ENCODE measurements at regions of chr6 and their contacts with region 1.

Region 1: GRCh38 chr6:31652925-31653718 is 661 bp upstream of the BAG6 start:
- DNase-seq: peak; percentile 96
- ATAC-seq: peak; percentile 73
- H3K4me3 Mint-ChIP-seq: peak overlapping the region; percentile 93
- H3K27ac Mint-ChIP-seq: peak overlapping the region; percentile 100
- H3K4me1 Mint-ChIP-seq: peaks cover 55% of the 10 kb centered on the region
- H3K27me3 Mint-ChIP-seq: no peaks in the 10 kb centered on the region
- CTCF ChIP-seq: no peak

Region 2: GRCh38 chr6:31419842-31420241 is 233.3 kb before region 1 on chr6:
- CTCF ChIA-PET with region 1: no interaction called
- POLR2A ChIA-PET with region 1: no interaction called
- intact Hi-C with region 1: no loop called
- DNase-seq: no peak
- ATAC-seq: no peak
- H3K4me3 Mint-ChIP-seq: no peak overlapping the region
- H3K27ac Mint-ChIP-seq: no peak overlapping the region
- H3K4me1 Mint-ChIP-seq: peaks cover 1% of the 10 kb centered on the region
- H3K27me3 Mint-ChIP-seq: no peaks in the 10 kb centered on the region
- CTCF ChIP-seq: no peak

Region 3: DNA sequence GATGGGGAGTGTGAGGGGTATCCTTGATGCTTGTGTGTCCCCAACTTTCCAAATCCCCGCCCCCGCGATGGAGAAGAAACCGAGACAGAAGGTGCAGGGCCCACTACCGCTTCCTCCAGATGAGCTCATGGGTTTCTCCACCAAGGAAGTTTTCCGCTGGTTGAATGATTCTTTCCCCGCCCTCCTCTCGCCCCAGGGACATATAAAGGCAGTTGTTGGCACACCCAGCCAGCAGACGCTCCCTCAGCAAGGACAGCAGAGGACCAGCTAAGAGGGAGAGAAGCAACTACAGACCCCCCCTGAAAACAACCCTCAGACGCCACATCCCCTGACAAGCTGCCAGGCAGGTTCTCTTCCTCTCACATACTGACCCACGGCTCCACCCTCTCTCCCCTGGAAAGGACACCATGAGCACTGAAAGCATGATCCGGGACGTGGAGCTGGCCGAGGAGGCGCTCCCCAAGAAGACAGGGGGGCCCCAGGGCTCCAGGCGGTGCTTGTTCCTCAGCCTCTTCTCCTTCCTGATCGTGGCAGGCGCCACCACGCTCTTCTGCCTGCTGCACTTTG is 77.7 kb before region 1 on chr6 and contains the start of gene TNF:
- CTCF ChIA-PET with region 1: interaction called, 4 read pairs
- POLR2A ChIA-PET with region 1: interaction called, 12 read pairs
- intact Hi-C with region 1: no loop called
- DNase-seq: peak; percentile 87
- ATAC-seq: peak; percentile 21
- H3K4me3 Mint-ChIP-seq: peak within 1 kb of the TSS; percentile 96
- H3K27ac Mint-ChIP-seq: peak within 1 kb of the TSS; percentile 97
- H3K4me1 Mint-ChIP-seq: peaks cover 54% of the 10 kb centered on the region
- H3K27me3 Mint-ChIP-seq: no peaks in the 10 kb centered on the region
- CTCF ChIP-seq: no peak
- total RNA-seq, gene TNF: 89.2 to 92.5 TPM

Region 4: DNA sequence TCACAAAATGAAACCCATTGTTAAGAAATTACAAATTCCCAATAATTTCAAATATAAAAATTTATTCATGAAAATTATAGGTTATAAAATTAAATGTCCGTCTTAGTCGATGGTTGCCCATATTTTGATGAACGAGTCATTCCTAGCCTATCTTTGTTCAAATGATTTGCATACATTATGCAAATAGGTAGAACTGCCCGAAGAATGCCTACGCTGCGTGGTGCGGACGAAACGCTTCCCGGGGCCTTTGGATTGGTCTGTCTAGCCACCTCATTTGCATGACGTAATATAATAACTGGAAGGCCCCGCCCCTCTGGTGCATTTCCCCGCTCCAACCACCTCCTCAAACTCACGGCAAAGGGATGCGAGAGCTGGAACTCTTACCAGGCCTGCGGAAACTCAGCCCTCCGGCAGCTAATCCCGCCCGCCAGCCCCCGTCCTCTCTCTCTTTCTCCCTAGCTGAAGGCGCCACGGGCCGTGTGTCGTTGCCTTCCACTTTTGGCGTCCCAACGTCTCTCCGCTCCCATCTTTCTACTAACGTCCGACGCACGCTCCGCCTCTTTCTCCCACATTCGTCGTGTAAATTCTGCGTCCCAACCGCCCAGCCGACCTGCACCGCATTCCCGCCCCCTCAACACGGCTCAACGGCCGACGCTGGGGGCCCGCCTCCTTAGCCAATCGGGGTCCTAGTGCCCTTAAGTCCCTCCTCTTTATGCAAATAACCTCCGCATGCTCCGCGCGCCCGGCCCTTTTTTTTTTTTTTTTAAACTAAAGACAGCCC is 33.1 kb before region 1 on chr6:
- CTCF ChIA-PET with region 1: interaction called, 4 read pairs
- POLR2A ChIA-PET with region 1: interaction called, 235 read pairs
- intact Hi-C with region 1: no loop called
- DNase-seq: peak; percentile 99
- ATAC-seq: peak; percentile 84
- H3K4me3 Mint-ChIP-seq: peak overlapping the region; percentile 95
- H3K27ac Mint-ChIP-seq: peak overlapping the region; percentile 97
- H3K4me1 Mint-ChIP-seq: peaks cover 59% of the 10 kb centered on the region
- H3K27me3 Mint-ChIP-seq: no peaks in the 10 kb centered on the region
- CTCF ChIP-seq: no peak

Region 5: DNA sequence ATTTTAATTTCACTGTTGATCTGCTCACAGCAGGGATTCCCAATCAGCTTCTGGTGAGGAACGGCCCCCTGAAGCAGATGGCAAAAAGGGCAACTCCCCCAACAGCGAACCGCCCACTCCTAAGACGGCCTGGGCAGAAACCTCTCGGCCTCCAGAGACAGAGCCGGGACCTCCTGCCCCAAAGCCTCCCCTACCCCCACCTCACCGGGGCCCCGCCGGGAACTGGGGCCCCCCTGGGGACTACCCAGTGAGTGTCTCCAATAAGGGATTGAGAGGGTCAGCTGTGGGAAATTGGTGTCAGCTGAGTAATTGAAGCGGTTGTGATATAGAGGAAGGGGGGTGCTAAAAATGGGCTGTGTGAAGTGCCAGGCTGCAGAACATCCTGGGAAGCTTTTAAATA is 26.2 kb before region 1 on chr6:
- CTCF ChIA-PET with region 1: interaction called, 4 read pairs
- POLR2A ChIA-PET with region 1: interaction called, 235 read pairs
- intact Hi-C with region 1: no loop called
- DNase-seq: no peak
- ATAC-seq: no peak
- H3K4me3 Mint-ChIP-seq: no peak overlapping the region
- H3K27ac Mint-ChIP-seq: no peak overlapping the region
- H3K4me1 Mint-ChIP-seq: peaks cover 23% of the 10 kb centered on the region
- H3K27me3 Mint-ChIP-seq: no peaks in the 10 kb centered on the region
- CTCF ChIP-seq: no peak

Region 6: DNA sequence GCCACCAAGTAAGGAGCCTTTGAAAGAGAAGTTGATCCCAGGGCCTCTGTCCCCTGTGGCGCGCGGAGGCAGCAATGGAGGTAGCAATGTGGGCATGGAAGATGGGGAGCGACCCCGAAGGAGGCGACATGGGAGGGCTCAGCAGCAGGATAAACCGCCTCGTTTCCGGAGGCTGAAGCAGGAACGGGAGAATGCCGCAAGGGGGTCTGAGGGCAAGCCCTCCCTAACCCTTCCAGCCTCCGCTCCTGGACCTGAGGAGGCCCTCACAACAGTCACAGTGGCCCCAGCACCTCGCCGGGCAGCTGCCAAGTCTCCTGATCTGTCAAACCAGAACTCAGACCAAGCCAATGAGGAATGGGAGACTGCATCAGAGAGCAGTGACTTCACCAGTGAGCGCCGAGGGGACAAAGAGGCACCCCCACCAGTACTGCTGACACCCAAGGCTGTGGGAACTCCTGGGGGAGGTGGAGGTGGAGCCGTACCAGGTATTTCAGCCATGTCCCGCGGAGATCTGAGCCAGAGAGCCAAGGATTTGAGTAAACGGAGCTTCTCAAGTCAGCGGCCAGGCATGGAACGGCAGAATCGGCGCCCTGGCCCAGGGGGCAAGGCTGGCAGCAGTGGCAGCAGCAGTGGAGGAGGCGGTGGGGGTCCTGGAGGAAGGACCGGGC is 20.7 kb before region 1 on chr6:
- CTCF ChIA-PET with region 1: interaction called, 3 read pairs
- POLR2A ChIA-PET with region 1: interaction called, 235 read pairs
- intact Hi-C with region 1: no loop called
- DNase-seq: no peak
- ATAC-seq: no peak
- H3K4me3 Mint-ChIP-seq: no peak overlapping the region
- H3K27ac Mint-ChIP-seq: peak overlapping the region; percentile 27
- H3K4me1 Mint-ChIP-seq: no peaks in the 10 kb centered on the region
- H3K27me3 Mint-ChIP-seq: no peaks in the 10 kb centered on the region
- CTCF ChIP-seq: no peak

Region 7: DNA sequence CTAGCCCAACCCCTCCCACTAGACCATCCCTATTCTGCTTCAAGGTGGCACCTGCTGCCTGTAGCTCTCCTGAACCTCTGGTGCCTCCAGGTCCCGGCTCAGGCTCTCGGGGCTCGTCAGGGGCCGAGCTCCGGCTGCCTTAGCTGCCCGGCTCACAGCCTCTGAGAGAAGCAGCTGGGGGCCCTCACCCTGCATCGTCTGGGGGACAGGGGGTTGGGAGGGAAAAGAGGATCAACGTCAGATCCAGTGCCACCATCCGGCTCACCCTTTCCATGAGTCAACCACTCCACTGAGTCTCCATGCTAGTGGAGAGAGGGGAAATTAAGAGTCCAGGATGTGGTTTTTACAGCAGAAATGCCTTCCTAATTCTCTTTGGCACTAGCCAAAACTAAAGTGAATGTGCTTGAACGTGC is 13.7 kb before region 1 on chr6:
- CTCF ChIA-PET with region 1: interaction called, 4 read pairs
- POLR2A ChIA-PET with region 1: interaction called, 62 read pairs
- intact Hi-C with region 1: no loop called
- DNase-seq: peak; percentile 49
- ATAC-seq: peak; percentile 48
- H3K4me3 Mint-ChIP-seq: no peak overlapping the region
- H3K27ac Mint-ChIP-seq: peak overlapping the region; percentile 74
- H3K4me1 Mint-ChIP-seq: peaks cover 5% of the 10 kb centered on the region
- H3K27me3 Mint-ChIP-seq: no peaks in the 10 kb centered on the region
- CTCF ChIP-seq: no peak

Region 8: DNA sequence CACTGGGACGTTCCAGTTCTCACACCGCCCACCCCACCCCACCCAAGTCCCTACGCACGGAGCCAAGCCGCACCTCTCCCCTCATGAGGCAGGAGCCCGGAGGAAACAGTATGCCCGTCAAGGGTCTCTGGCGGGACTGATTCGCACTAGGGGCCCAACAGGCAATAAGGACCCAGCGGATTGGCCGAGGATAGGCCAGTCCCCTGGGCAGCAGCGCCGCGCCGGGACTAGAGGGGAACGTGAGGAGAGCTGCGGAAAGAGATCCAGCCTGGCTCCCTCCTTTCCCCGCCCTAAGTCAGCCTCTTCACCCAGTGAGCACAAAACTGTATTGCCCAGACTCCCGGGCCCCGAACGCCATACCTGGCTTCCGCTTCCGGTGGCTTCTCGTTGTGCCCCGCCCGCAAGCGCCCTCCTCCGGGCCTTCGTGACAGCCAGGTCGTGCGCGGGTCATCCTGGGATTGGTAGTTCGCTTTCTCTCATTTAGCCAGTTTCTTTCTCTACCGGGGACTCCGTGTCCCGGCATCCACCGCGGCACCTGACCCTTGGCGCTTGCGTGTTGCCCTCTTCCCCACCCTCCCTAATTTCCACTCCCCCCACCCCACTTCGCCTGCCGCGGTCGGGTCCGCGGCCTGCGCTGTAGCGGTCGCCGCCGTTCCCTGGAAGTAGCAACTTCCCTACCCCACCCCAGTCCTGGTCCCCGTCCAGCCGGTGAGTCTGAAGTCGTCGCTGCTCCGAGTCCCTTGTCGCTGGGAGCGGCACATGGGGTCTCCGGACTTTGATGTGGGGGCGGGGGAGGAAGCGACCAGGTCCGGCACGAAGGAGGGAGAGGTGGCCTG is 12.6 kb after region 1 on chr6 and contains the start of gene CSNK2B:
- CTCF ChIA-PET with region 1: interaction called, 16 read pairs
- POLR2A ChIA-PET with region 1: interaction called, 160 read pairs
- intact Hi-C with region 1: no loop called
- DNase-seq: peak; percentile 99
- ATAC-seq: peak; percentile 88
- H3K4me3 Mint-ChIP-seq: peak within 1 kb of the TSS; percentile 98
- H3K27ac Mint-ChIP-seq: peak within 1 kb of the TSS; percentile 97
- H3K4me1 Mint-ChIP-seq: peaks cover 61% of the 10 kb centered on the region
- H3K27me3 Mint-ChIP-seq: no peaks in the 10 kb centered on the region
- CTCF ChIP-seq: no peak
- total RNA-seq, gene CSNK2B: 241 to 247 TPM